HCT116 (cell line): ENCODE measurements at regions of chr20 and their contacts with region 1.

Region 1: GRCh38 chr20:22339091-22339881 is 245.1 kb downstream of the FOXA2 start:
- DNase-seq: peak; percentile 70
- ATAC-seq: peak; percentile 78
- H3K4me3 ChIP-seq: no peak overlapping the region
- H3K27ac ChIP-seq: no peak overlapping the region
- H3K4me1 ChIP-seq: peaks cover 2 to 16% of the 10 kb centered on the region in 2 experiments; a peak in 2 of 4 replicates
- H3K27me3 ChIP-seq: no peaks in the 10 kb centered on the region
- CTCF ChIP-seq: peak; percentile 59 to 88 (median 84)
- POLR2A ChIP-seq: no peak
- RAD21 ChIP-seq: peak; percentile 93

Region 2: DNA sequence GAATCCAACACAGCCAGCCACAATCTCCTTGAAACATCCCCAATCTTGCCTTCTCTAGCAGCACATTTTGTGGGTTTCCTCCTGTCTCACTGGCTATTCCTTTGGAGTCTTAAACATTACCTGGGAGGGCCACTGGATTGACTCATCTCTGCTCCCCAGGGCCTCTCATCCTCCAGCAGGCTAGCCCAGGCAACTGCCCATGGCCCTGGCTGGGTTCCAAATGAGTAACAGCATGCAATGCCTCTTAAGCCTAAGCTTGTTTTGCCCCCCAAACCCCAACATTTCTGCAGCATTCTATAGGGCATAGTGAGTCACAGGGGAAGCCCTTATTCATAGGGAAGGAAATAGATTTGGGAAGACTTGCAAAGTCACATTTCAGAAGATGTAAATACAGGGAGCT is 40.2 kb after region 1 on chr20:
- CTCF ChIA-PET with region 1: no interaction called
- POLR2A ChIA-PET with region 1: no interaction called
- RAD21 ChIA-PET with region 1: no interaction called
- intact Hi-C with region 1: loop called (anchors 5 kb)
- DNase-seq: peak; percentile 77
- ATAC-seq: peak; percentile 82
- H3K4me3 ChIP-seq: 0 out of 4 replicates have a peak overlapping the region, but pooled peaks of 1 of the 2 experiments have one; percentile 10
- H3K27ac ChIP-seq: peak overlapping the region; percentile 54
- H3K4me1 ChIP-seq: peaks cover 28 to 52% of the 10 kb centered on the region in 2 experiments
- H3K27me3 ChIP-seq: no peaks in the 10 kb centered on the region
- CTCF ChIP-seq: no peak
- POLR2A ChIP-seq: no peak
- RAD21 ChIP-seq: no peak

Region 3: DNA sequence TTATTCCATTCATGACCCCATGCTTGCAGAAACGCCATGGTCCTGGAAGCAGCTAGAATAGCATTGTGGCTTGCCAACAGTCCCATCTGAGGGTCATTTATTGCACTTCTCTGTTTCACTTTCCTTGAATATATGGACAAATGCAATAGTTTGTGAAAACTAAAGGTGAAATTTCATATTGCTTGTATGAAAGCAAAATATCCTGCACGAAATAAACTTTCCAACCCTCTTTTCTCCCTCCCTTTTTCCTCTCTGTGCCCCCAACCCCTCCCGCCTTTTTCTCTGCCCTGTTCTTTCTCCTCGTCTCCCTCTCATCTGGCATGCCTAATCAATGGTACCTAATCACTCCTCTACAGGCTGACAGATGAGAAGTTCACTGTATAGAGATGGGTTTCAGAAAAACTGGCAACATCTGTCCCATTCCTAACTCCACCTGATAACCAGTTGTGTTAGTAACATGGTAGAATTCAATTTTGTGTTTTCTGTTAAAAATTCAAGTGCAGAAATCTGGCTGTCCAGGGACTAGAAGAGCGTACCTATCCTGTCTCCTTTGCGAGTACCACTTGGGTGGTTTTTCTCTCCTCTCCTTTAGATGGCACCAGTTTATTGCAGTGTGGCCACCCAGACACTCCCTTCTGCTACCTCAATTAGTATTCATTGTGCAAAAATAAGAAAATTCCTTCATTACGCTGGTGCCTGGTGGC is 46.5 kb after region 1 on chr20:
- CTCF ChIA-PET with region 1: no interaction called
- POLR2A ChIA-PET with region 1: no interaction called
- RAD21 ChIA-PET with region 1: no interaction called
- intact Hi-C with region 1: loop called (anchors 2 kb)
- DNase-seq: no peak
- ATAC-seq: peak; percentile 51
- H3K4me3 ChIP-seq: no peak overlapping the region
- H3K27ac ChIP-seq: no peak overlapping the region
- H3K4me1 ChIP-seq: peaks cover 17 to 33% of the 10 kb centered on the region in 2 experiments
- H3K27me3 ChIP-seq: no peaks in the 10 kb centered on the region
- CTCF ChIP-seq: peak; percentile 31 to 52 (median 42); a peak in 4 of 6 replicates
- POLR2A ChIP-seq: no peak
- RAD21 ChIP-seq: peak; percentile 81

Region 4: GRCh38 chr20:22453239-22454080 is 114.2 kb after region 1 on chr20:
- CTCF ChIA-PET with region 1: interaction called, 7 read pairs
- POLR2A ChIA-PET with region 1: interaction called, 3 read pairs
- RAD21 ChIA-PET with region 1: no interaction called
- intact Hi-C with region 1: loop called (anchors 1 kb)
- DNase-seq: peak; percentile 32
- ATAC-seq: 0 out of 2 replicates have a peak, but pooled peaks have one; percentile 58
- H3K4me3 ChIP-seq: no peak overlapping the region
- H3K27ac ChIP-seq: no peak overlapping the region
- H3K4me1 ChIP-seq: no peaks in the 10 kb centered on the region
- H3K27me3 ChIP-seq: 0 out of 2 replicates have a peak, but pooled peaks cover 3% of the 10 kb centered on the region
- CTCF ChIP-seq: peak; percentile 25 to 81 (median 80); a peak in 5 of 6 replicates
- POLR2A ChIP-seq: no peak
- RAD21 ChIP-seq: peak; percentile 42; the same call in 1 of the 2 replicates

Region 5: DNA sequence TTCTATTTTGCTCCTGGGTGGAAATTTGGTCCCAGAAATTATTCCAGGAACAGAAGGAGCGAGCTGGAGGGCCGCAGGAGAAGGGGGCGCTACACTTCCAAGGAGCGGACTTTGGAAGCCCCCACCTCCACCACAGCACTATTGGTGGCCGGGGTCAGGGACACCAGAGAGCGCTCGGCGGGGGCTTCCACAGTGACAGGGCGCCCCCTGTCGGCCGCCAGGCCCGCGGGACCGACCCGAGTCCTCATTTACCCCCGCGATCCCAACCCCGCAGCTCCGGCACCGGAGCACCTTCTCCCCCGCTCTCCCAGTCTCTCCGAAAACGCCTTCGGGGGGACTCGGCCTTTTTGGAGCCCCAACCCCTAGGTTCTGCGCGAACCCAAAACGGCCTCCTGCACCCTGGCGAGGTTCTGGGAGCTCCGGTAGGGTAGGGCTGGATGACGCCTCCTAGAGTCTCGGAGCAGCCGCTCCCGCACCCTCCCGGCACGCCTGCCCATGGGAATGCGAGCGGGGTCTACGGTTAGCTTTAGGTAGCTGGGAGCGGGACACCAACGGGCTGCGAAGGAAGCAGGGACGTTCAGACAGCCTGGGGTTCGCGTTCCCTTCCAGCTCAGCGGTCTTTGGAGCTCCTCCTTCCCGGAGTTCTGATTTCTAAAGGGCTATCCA is 247.5 kb after region 1 on chr20:
- CTCF ChIA-PET with region 1: interaction called, 72 read pairs
- POLR2A ChIA-PET with region 1: no interaction called
- RAD21 ChIA-PET with region 1: interaction called, 12 to 14 read pairs
- intact Hi-C with region 1: loop called (anchors 1 kb)
- DNase-seq: no peak
- ATAC-seq: peak; percentile 80
- H3K4me3 ChIP-seq: peak overlapping the region in 1 of 2 experiments; percentile 34; a peak in 2 of 4 replicates
- H3K27ac ChIP-seq: no peak overlapping the region
- H3K4me1 ChIP-seq: no peaks in the 10 kb centered on the region
- H3K27me3 ChIP-seq: peaks cover 23% of the 10 kb centered on the region
- CTCF ChIP-seq: peak; percentile 73 to 77 (median 73)
- POLR2A ChIP-seq: no peak
- RAD21 ChIP-seq: peak; percentile 80

Region 6: DNA sequence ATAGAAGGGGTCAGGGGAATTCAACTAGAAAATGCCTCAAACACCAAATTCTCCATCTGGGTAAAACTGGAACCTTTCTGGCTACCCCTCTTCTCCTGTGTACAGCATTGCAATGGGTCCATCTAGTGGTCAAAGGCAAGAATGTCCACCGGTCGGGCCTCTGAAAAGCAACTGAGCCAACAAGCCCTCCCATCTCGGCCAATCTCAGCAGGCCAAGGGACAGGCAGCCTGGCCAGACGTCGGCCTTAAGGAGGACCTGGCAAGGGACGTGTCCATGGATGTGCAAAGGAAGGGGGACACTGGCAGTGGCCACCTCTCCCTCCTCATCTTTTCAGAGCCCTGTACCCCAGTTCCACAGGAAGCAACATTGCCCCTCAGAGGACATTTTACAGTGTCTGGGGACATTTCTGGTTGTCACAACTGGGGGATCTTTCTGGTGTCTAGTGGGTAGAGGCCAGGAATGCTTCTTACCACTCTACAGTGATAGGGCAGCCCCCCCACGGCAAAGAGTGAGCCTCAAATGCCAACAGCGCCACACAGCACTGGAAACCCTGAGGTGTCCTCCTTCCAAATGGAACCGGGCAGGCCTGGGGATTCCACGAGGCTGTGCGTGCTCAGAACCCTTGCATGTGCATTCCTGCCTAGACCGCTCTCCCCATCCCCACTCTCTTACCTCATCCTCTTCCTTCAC is 344.9 kb after region 1 on chr20:
- CTCF ChIA-PET with region 1: interaction called, 79 read pairs
- POLR2A ChIA-PET with region 1: interaction called, 5 read pairs
- RAD21 ChIA-PET with region 1: interaction called, 3 to 5 read pairs
- intact Hi-C with region 1: loop called (anchors 1 kb)
- DNase-seq: peak; percentile 60
- ATAC-seq: peak; percentile 84
- H3K4me3 ChIP-seq: no peak overlapping the region
- H3K27ac ChIP-seq: no peak overlapping the region
- H3K4me1 ChIP-seq: peaks cover 3 to 5% of the 10 kb centered on the region in 2 experiments; a peak in 1 of 4 replicates
- H3K27me3 ChIP-seq: no peaks in the 10 kb centered on the region; the same call in 1 of the 2 replicates
- CTCF ChIP-seq: peak; percentile 79 to 85 (median 80)
- POLR2A ChIP-seq: no peak
- RAD21 ChIP-seq: peak; percentile 92

Region 7: DNA sequence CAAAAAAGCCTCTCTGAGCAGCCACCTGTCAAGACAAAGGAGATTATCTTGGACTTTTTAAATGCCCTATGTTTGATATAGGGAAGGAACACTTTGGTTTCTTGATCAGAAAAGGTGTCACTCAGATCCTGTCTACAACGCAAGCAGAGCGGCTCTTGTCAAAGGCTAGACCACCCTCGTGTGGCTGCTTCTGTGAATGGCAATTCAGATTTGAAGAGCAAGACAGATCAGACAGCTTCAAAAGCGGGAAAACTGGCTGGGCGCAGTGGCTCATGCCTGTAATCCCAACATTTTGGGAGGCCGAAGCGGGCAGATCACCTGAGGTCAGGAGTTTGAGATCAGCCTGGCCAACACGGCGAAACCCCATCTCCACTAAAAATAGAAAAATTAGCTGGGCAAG is 1001.2 kb after region 1 on chr20:
- CTCF ChIA-PET with region 1: interaction called, 4 read pairs
- POLR2A ChIA-PET with region 1: no interaction called
- RAD21 ChIA-PET with region 1: no interaction called
- intact Hi-C with region 1: loop called (anchors 5 kb)
- DNase-seq: peak; percentile 54
- ATAC-seq: peak; percentile 92
- H3K4me3 ChIP-seq: no peak overlapping the region
- H3K27ac ChIP-seq: no peak overlapping the region
- H3K4me1 ChIP-seq: no peaks in the 10 kb centered on the region
- H3K27me3 ChIP-seq: peaks cover 18% of the 10 kb centered on the region; the same call in 1 of the 2 replicates
- CTCF ChIP-seq: peak; percentile 40 to 53 (median 50); a peak in 5 of 6 replicates
- POLR2A ChIP-seq: no peak
- RAD21 ChIP-seq: peak; percentile 76